Endothelial cell of umbilical vein (primary cell): ENCODE measurements at regions of chr6 and their contacts with region 1.

Region 1: DNA sequence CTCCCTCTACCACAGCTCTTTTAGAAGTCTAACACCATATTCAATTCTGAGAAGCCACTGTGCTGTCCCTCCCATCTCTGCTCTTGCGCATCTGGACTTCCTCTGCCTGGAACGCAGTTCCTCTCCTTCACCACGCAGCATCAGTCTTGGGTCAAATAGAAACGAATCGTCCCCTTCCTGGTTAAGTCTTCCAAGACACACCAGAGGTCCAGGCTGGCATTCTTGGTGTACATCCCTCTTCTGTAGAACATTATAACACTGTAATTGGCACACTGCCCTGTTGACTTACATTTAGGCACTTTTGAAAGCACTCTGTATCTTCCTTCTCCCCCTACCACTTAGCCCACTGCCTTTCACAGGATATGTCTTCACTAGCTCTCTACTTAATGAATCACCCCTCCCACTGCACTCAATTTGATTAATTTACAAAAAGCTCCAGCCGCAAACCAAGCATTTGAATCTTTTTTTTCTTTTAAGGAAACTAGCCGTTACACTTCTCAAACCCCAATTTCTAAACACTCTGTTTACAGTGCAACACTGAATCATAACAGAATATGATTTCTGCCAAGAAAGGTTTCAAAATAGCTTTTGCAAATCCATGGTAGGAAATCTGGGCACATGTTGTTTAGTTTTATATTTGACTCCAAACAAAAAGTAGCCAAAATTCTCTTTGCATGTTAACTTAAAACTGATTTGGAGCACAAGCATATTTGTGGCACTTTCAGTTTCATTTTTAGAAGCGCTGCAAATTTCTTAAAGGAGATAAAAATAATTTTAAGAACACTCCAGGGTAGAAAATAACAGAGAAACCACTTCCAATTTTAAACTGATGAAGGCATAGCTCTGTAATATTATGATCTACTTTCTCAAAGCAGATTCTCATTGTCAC is 140.7 kb upstream of the CARMIL1 start:
- DNase-seq: peak; percentile 84
- H3K4me3 ChIP-seq: peak overlapping the region; percentile 29 to 71 (median 43)
- H3K27ac ChIP-seq: peak overlapping the region; percentile 45
- H3K4me1 ChIP-seq: peaks cover 13% of the 10 kb centered on the region
- H3K27me3 ChIP-seq: no peaks in the 10 kb centered on the region
- CTCF ChIP-seq: peak in 1 of 2 donors; percentile 11
- POLR2A ChIP-seq: no peak

Region 2: DNA sequence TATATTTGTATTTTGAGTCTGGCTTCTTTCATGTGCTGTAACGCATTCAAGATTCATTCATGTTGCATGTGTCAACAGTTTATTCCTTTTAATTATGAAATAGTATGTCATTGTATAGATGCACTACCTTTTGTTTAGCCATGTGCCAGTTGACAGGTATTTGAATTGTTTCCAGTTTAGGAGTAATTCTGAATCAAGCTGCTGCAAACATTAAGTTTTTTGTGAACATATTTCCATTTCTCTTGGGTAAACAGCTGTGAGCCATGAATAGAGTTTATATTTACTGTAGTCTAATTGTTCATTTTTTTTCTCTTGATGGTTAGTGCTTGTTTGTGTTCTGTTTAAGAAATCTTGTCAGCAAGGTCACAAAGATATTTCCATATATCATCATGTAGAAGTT is 60.3 kb before region 1 on chr6:
- CTCF ChIA-PET with region 1: no interaction called
- POLR2A ChIA-PET with region 1: no interaction called
- dilution Hi-C with region 1: no loop called
- intact Hi-C with region 1: no loop called
- DNase-seq: no peak
- H3K4me3 ChIP-seq: no peak overlapping the region
- H3K27ac ChIP-seq: no peak overlapping the region
- H3K4me1 ChIP-seq: no peaks in the 10 kb centered on the region
- H3K27me3 ChIP-seq: no peaks in the 10 kb centered on the region
- CTCF ChIP-seq: no peak
- POLR2A ChIP-seq: no peak

Region 3: DNA sequence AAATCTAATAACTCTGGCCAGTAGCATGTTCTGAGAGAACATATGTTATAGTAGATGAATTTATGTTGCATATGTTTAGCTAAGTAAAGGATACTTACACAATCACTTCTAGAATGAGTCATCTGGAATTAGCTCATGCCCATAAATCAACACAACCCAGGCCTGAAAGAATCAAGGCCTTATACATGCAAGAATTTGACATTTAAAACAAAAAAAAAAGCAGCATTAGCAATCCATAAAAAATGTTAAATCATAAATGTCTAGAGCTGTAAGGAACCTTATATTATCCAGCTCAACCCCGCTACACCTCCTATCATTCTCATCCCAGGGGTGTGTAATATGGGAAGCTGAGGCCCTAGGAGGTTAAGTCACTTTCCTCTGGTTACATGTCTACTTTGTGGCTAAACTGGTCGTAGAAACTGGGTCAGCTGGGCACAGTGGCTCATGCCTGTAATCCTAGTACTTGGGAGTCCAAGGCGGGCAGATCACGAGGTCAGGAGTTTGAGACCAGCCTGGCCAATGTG is 35.5 kb after region 1 on chr6:
- CTCF ChIA-PET with region 1: interaction called, 7 read pairs
- POLR2A ChIA-PET with region 1: no interaction called
- dilution Hi-C with region 1: no loop called
- intact Hi-C with region 1: loop called (anchors 2 kb)
- DNase-seq: peak; percentile 93
- H3K4me3 ChIP-seq: no peak overlapping the region
- H3K27ac ChIP-seq: peak overlapping the region; percentile 38
- H3K4me1 ChIP-seq: peaks cover 37% of the 10 kb centered on the region
- H3K27me3 ChIP-seq: no peaks in the 10 kb centered on the region
- CTCF ChIP-seq: no peak
- POLR2A ChIP-seq: no peak